Transverse colon (tissue), 4 donors: ENCODE measurements at regions of chr3 and their contacts with region 1.

Region 1: DNA sequence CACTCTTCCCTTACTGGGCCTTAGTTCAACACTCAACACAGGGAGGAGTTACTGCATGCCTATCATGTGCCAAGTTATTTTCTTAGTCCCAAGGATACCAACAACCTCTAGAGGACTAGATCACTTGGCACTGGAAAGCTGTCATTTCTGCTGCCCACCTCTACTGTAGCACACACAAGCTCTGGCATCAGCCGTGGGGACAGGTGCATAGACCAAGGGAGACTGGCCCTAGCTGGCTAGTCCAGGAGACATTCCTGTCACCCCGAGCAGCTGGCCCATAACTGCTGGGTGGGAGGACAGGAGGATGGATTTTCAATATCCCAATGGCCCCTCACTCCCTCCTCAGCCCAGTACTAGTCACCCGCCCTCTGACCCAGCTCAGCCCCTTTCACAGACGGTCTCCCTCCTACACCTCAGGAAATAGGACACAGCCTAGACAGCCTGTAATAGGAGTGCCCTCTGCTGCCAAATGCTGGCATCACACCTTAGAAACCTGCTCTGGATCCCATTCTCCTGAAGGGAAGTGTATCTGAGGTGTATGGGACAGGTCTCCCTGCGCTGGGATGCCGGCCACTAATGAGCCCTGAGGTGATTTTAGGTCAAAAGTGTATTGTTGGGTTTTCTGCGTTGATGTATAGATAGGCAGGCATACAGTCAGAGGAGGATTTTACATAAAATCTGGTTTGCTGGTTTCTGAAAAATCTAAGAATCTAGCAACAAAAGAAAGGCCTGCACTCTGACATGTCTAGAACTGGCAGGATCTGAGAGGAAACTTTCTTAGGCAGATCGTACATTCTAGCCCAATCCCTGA is 3.4 kb upstream of the DZIP1L start:
- DNase-seq: peak; percentile 72
- H3K4me3 ChIP-seq: no peak overlapping the region
- H3K27ac ChIP-seq: no peak overlapping the region
- H3K4me1 ChIP-seq: peaks cover 0 to 17% (median 6%) of the 10 kb centered on the region in 4 donors
- H3K27me3 ChIP-seq: peaks cover 14% of the 10 kb centered on the region
- CTCF ChIP-seq: peak; percentile 63 to 81 (median 72)
- EP300 ChIP-seq: no peak
- POLR2A ChIP-seq: no peak

Region 2: GRCh38 chr3:138068579-138069174 is 50.1 kb before region 1 on chr3:
- in situ Hi-C with region 1: loop called in 3 of 4 experiments (anchors 5 to 10 kb)
- intact Hi-C with region 1: loop called (anchors 2 kb)
- DNase-seq: peak; percentile 76
- H3K4me3 ChIP-seq: no peak overlapping the region
- H3K27ac ChIP-seq: no peak overlapping the region
- H3K4me1 ChIP-seq: no peaks in the 10 kb centered on the region
- H3K27me3 ChIP-seq: no peaks in the 10 kb centered on the region
- CTCF ChIP-seq: peak; percentile 90 to 98 (median 96)
- EP300 ChIP-seq: no peak
- POLR2A ChIP-seq: no peak